ENCODE measurements at regions of chr4 and their contacts with region 1.

Region 1: GRCh38 chr4:74932816-74933561 is at the start of gene PARM1:
- DNase-seq: peak; percentile 73
- H3K4me3 Mint-ChIP-seq: peak within 1 kb of the TSS; percentile 76
- H3K27ac Mint-ChIP-seq: no peak within 1 kb of the TSS
- H3K4me1 Mint-ChIP-seq: peaks cover 11% of the 10 kb centered on the region
- H3K27me3 Mint-ChIP-seq: peaks cover 13% of the 10 kb centered on the region
- CTCF ChIP-seq: peak; percentile 65
- total RNA-seq, gene PARM1: 0.58 and 1.4 TPM in 2 replicates

Region 2: DNA sequence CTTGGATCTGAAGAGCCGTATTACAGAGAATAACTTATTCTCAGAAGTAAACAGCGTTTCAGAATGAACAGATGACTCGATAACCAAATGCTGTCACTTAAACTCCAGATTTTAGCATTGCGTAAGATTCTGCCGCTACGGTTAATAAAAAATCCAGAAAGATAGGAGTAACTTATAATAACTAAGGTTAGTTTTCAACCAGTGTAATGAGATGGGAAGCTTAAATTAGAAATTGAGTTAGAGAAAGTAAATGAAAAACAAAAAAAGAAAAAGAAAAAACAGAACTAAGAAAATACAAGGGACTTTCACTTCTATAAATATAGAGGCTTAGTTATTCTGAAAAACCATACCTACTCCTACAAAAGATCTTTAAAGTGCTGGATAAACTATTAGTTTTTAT is 13.2 kb before region 1 on chr4:
- CTCF ChIA-PET with region 1: interaction called, 11 read pairs
- POLR2A ChIA-PET with region 1: no interaction called
- intact Hi-C with region 1: no loop called
- DNase-seq: no peak
- H3K4me3 Mint-ChIP-seq: no peak overlapping the region
- H3K27ac Mint-ChIP-seq: no peak overlapping the region
- H3K4me1 Mint-ChIP-seq: no peaks in the 10 kb centered on the region
- H3K27me3 Mint-ChIP-seq: no peaks in the 10 kb centered on the region
- CTCF ChIP-seq: no peak

Region 3: DNA sequence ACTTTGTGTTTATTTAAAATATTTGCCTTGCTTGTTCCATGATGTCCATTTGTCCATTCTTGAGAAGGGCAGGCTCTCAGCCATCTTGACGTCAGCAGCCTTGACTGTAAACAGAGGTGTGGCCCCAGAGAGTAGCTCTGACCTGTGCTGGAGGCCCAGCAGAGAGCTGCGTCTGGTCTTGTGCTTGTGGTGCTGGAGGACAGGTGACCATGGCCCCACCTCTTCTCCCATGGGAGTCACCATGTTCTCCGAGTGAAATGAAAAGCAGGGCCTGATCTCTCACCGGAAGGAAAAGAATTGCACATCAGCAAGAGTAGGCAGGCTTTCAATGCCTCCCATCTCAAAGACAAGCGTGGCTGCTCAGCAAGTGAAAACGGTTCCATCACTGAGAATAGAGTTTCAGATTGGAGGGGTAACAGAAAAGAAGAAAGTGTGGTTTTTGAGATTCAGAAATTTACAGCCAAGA is 11.4 kb after region 1 on chr4:
- CTCF ChIA-PET with region 1: interaction called, 12 read pairs
- POLR2A ChIA-PET with region 1: no interaction called
- intact Hi-C with region 1: no loop called
- DNase-seq: no peak
- H3K4me3 Mint-ChIP-seq: no peak overlapping the region
- H3K27ac Mint-ChIP-seq: no peak overlapping the region
- H3K4me1 Mint-ChIP-seq: peaks cover 5% of the 10 kb centered on the region
- H3K27me3 Mint-ChIP-seq: no peaks in the 10 kb centered on the region
- CTCF ChIP-seq: no peak

Region 4: DNA sequence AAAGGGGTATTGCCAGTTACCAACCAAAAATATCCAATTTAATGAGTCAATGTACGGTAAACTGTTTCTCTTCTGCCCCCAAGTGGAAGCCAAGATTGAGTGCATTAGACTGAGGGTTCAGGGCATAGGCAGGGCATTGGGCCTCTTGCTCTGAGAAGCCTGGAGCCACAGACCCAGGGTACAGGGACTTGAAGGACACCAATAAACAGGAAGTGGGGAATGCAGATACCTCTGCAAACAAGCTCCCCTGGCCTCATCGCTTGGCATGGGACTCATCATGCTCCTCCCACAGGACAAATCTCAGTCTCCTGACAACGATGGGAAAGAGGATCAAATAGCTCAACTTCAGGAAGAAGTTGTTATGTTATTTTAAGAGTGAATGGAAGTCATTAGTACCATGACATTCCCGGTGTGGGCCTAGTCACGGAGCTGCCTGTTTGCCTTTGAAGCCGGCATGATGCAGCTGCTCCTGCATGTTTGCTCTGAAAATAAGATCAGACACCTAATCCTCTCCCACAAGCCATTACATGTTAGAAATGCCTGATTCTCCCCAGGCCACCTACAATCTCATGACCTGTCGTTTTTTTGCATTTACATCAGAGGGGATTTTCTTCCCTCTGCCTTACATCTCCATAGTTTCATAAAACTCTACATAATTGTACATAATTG is 357.1 kb after region 1 on chr4:
- CTCF ChIA-PET with region 1: interaction called, 52 read pairs
- POLR2A ChIA-PET with region 1: no interaction called
- intact Hi-C with region 1: loop called (anchors 1 kb)
- DNase-seq: peak; percentile 65
- H3K4me3 Mint-ChIP-seq: no peak overlapping the region
- H3K27ac Mint-ChIP-seq: no peak overlapping the region
- H3K4me1 Mint-ChIP-seq: no peaks in the 10 kb centered on the region
- H3K27me3 Mint-ChIP-seq: no peaks in the 10 kb centered on the region
- CTCF ChIP-seq: peak; percentile 59

Region 5: DNA sequence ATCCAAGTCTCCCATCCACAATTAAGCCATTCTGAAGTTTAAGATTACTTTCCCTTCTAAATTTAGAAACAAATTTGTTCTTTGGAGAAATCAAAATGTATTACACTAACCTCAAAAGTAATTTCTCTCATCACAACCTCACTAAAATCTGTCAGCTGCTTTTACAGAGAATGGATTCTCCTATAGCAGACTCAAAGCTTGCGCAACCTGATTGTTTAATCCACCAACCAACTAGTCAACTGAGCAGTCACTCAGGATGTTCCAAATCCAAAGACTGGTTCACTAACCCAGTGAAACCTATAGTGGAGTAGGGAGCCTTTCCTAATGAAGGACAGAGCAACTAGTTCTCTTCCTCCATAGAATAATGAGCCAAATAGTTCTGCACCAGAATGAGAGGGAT is 536.9 kb after region 1 on chr4:
- CTCF ChIA-PET with region 1: interaction called, 5 read pairs
- POLR2A ChIA-PET with region 1: interaction called, 3 read pairs
- intact Hi-C with region 1: loop called (anchors 1 kb)
- DNase-seq: no peak
- H3K4me3 Mint-ChIP-seq: no peak overlapping the region
- H3K27ac Mint-ChIP-seq: no peak overlapping the region
- H3K4me1 Mint-ChIP-seq: peaks cover 4% of the 10 kb centered on the region
- H3K27me3 Mint-ChIP-seq: no peaks in the 10 kb centered on the region
- CTCF ChIP-seq: no peak

Region 6: DNA sequence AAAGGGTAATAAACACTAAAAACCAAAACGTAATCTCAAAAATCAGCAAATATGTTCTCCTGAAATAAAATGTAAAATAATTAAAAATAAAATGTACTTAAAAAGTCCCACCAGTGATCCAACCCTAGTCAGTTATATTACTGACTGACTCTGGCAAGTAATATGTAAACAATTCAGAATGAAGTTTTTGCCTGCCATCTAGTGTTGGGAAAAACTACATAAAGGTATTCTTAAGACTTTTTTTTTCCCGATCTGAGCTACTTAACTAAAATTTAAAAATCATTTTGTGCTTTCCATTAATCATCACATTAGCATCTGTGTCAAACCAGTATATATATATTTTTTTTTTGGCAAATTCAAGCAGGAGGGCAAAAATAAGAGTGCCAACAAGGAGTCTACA is 557.2 kb after region 1 on chr4:
- CTCF ChIA-PET with region 1: interaction called, 5 read pairs
- POLR2A ChIA-PET with region 1: interaction called, 3 read pairs
- intact Hi-C with region 1: loop called (anchors 5 kb)
- DNase-seq: peak; percentile 29
- H3K4me3 Mint-ChIP-seq: no peak overlapping the region
- H3K27ac Mint-ChIP-seq: no peak overlapping the region
- H3K4me1 Mint-ChIP-seq: peaks cover 7% of the 10 kb centered on the region
- H3K27me3 Mint-ChIP-seq: no peaks in the 10 kb centered on the region
- CTCF ChIP-seq: peak; percentile 16

Measured in MCF 10A (cell line).